ENCODE measurements at regions of chr4 and their contacts with region 1.

Region 1: GRCh38 chr4:6546681-6547447 is 28.1 kb upstream of the MAN2B2 start:
- DNase-seq: peak; percentile 79 to 84 (median 82)
- ATAC-seq: peak; percentile 87
- H3K4me3 ChIP-seq: no peak overlapping the region
- H3K27ac ChIP-seq: no peak overlapping the region
- H3K4me1 ChIP-seq: no peaks in the 10 kb centered on the region
- H3K27me3 ChIP-seq: peaks cover 0 to 29% of the 10 kb centered on the region in 2 experiments; a peak in 2 of 5 replicates
- CTCF ChIP-seq: peak; percentile 89 to 93 (median 91)
- EP300 ChIP-seq: no peak
- POLR2A ChIP-seq: no peak
- RAD21 ChIP-seq: peak; percentile 54 to 78

Region 2: GRCh38 chr4:6225469-6225868 is 321.4 kb before region 1 on chr4:
- CTCF ChIA-PET with region 1: no interaction called
- POLR2A ChIA-PET with region 1: no interaction called
- in situ Hi-C with region 1: no loop called
- intact Hi-C with region 1: no loop called
- DNase-seq: peak in 3 of 4 experiments; percentile 15 to 35 (median 23)
- ATAC-seq: 0 out of 3 replicates have a peak, but pooled peaks have one; percentile 43
- H3K4me3 ChIP-seq: no peak overlapping the region
- H3K27ac ChIP-seq: no peak overlapping the region
- H3K4me1 ChIP-seq: peaks cover 0 to 3% of the 10 kb centered on the region in 2 experiments; a peak in 1 of 5 replicates
- H3K27me3 ChIP-seq: no peaks in the 10 kb centered on the region; a peak in 1 of 5 replicates
- CTCF ChIP-seq: no peak
- EP300 ChIP-seq: no peak
- POLR2A ChIP-seq: no peak
- RAD21 ChIP-seq: no peak

Region 3: GRCh38 chr4:6250235-6250983 is 296.5 kb before region 1 on chr4:
- CTCF ChIA-PET with region 1: no interaction called
- POLR2A ChIA-PET with region 1: no interaction called
- in situ Hi-C with region 1: no loop called
- intact Hi-C with region 1: loop called (anchors 10 kb)
- DNase-seq: peak; percentile 61 to 68 (median 65)
- ATAC-seq: peak; percentile 78
- H3K4me3 ChIP-seq: no peak overlapping the region
- H3K27ac ChIP-seq: no peak overlapping the region
- H3K4me1 ChIP-seq: peaks cover 0 to 6% of the 10 kb centered on the region in 2 experiments; a peak in 1 of 5 replicates
- H3K27me3 ChIP-seq: peaks cover 0 to 5% of the 10 kb centered on the region in 2 experiments; a peak in 1 of 5 replicates
- CTCF ChIP-seq: peak; percentile 68 to 90 (median 75)
- EP300 ChIP-seq: no peak
- POLR2A ChIP-seq: no peak
- RAD21 ChIP-seq: peak; percentile 62 to 81

Region 4: GRCh38 chr4:6372649-6373525 is 174.0 kb before region 1 on chr4:
- CTCF ChIA-PET with region 1: no interaction called
- POLR2A ChIA-PET with region 1: no interaction called
- in situ Hi-C with region 1: no loop called
- intact Hi-C with region 1: no loop called
- DNase-seq: peak; percentile 62 to 92 (median 90)
- ATAC-seq: peak; percentile 94
- H3K4me3 ChIP-seq: no peak overlapping the region
- H3K27ac ChIP-seq: no peak overlapping the region
- H3K4me1 ChIP-seq: no peaks in the 10 kb centered on the region; a peak in 1 of 5 replicates
- H3K27me3 ChIP-seq: peaks cover 15 to 76% of the 10 kb centered on the region in 2 experiments; a peak in 4 of 5 replicates
- CTCF ChIP-seq: no peak
- EP300 ChIP-seq: no peak
- POLR2A ChIP-seq: no peak
- RAD21 ChIP-seq: no peak